ENCODE measurements at regions of chr3 and their contacts with region 1.

Region 1: GRCh38 chr3:65230256-65231139 is 542.7 kb upstream of the ADAMTS9 start:
- DNase-seq: no peak
- ATAC-seq: no peak
- H3K4me3 ChIP-seq: no peak overlapping the region
- H3K27ac ChIP-seq: no peak overlapping the region
- H3K4me1 ChIP-seq: no peaks in the 10 kb centered on the region
- H3K27me3 ChIP-seq: no peaks in the 10 kb centered on the region
- CTCF ChIP-seq: no peak

Region 2: GRCh38 chr3:65439641-65440284 is 209.3 kb after region 1 on chr3:
- intact Hi-C with region 1: no loop called
- DNase-seq: peak; percentile 44 to 61
- ATAC-seq: peak; percentile 84 to 93 (median 90)
- H3K4me3 ChIP-seq: no peak overlapping the region
- H3K27ac ChIP-seq: no peak overlapping the region
- H3K4me1 ChIP-seq: peaks cover 0 to 13% (median 6%) of the 10 kb centered on the region in 9 donors
- H3K27me3 ChIP-seq: no peaks in the 10 kb centered on the region
- CTCF ChIP-seq: peak; percentile 36 to 81 (median 69)

Region 3: GRCh38 chr3:66220602-66221377 is 990.3 kb after region 1 on chr3 and contains the start of gene SLC25A26:
- intact Hi-C with region 1: loop called in 1 of 10 experiments (anchors 5 kb)
- DNase-seq: peak; percentile 91 to 94
- ATAC-seq: peak; percentile 98 to 99 (median 99)
- H3K4me3 ChIP-seq: peak within 1 kb of the TSS; percentile 15 to 89 (median 68)
- H3K27ac ChIP-seq: peak within 1 kb of the TSS in 9 of 10 donors; percentile 37 to 86 (median 73)
- H3K4me1 ChIP-seq: peaks cover 0 to 22% (median 14%) of the 10 kb centered on the region in 9 donors
- H3K27me3 ChIP-seq: peaks cover 0 to 2% (median 0%) of the 10 kb centered on the region in 7 donors
- CTCF ChIP-seq: no peak
- total RNA-seq, gene SLC25A26: 21.6 to 44.2 (median 31.9) TPM